ENCODE measurements at regions of chr3 and their contacts with region 1.

Region 1: GRCh38 chr3:138594150-138594934 is at the start of gene CEP70:
- DNase-seq: peak; percentile 93
- ATAC-seq: peak; percentile 96
- H3K4me3 Mint-ChIP-seq: peak within 1 kb of the TSS; percentile 86
- H3K27ac Mint-ChIP-seq: peak within 1 kb of the TSS; percentile 87
- H3K4me1 Mint-ChIP-seq: peaks cover 12% of the 10 kb centered on the region
- H3K27me3 Mint-ChIP-seq: no peaks in the 10 kb centered on the region
- total RNA-seq, gene CEP70: 15.9 to 19.5 TPM

Region 2: DNA sequence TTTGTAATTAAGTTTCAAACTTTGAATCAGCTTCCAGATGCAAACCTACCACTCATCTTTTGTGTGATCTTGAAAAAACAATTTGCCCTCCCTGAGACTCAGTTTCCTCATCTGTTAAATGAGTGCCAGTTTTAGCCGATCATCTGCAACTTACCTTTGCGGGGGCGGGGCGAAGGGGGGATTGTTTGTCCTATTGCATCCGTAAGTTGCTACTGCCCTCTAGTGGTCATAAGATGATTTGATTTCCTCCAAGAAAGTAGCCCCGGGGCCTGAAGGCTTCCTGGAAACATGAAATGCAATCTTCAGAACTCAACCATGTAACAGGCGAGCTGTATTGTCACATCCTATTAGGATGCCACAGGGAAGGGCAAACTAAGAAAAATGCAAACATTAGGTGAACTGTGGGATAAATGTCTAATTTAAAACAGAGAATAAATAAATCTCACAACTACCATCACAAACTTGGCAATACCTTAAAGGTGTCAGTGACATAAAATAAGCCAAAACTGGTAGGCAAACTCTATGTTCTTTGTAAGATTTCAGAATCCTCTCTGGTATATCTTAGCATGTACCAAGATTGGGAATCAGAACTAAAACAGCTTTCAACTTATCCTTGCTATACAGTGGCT is 647.9 kb before region 1 on chr3:
- CTCF ChIA-PET with region 1: no interaction called
- POLR2A ChIA-PET with region 1: no interaction called
- DNase-seq: peak; percentile 59
- ATAC-seq: peak; percentile 61
- H3K4me3 Mint-ChIP-seq: no peak overlapping the region
- H3K27ac Mint-ChIP-seq: no peak overlapping the region
- H3K4me1 Mint-ChIP-seq: no peaks in the 10 kb centered on the region
- H3K27me3 Mint-ChIP-seq: no peaks in the 10 kb centered on the region

Region 3: DNA sequence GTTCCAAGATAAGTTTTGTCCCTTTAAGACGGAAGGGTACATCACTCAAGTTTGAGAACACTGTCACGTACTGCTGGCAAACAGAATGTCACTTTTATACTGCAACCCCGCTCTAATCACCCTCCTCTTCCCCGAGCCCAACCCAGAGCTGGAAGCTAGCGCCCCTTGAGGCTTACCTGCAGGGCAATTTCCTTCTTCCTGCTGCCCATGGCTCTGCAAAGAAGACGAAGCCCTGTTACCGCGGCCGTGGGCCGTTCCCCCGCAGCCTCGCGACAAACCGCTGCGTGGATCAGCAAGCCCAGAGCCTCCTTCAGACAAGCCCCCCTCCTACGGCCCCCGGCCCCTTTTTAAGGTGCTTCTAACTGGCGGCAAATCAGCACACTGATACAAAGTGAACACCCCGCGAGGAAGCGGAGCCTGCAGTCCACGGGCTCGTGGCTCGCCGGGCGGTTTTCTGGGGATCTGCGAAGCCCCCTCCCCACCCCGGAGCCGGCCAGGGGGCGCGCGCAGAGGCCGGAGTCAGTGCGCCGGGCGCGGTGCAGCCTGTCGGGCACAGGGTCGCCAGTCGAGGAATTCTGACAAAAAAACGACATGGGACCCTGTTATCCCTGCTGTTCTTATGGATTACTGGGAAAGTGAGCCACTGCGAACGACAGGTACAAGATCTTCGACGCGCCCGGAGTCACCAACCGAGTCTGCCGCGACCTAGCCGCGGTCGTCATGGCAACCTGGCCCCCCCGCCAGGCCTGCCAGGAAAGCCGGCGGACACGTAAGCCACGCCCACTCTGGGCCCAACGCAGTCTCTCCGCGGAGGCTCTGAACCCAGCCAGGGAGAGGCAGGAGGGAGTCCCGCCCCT is 265.0 kb before region 1 on chr3 and contains the start of gene NME9:
- CTCF ChIA-PET with region 1: no interaction called
- POLR2A ChIA-PET with region 1: no interaction called
- DNase-seq: peak; percentile 88
- ATAC-seq: peak; percentile 93
- H3K4me3 Mint-ChIP-seq: peak within 1 kb of the TSS; percentile 87
- H3K27ac Mint-ChIP-seq: peak within 1 kb of the TSS; percentile 81
- H3K4me1 Mint-ChIP-seq: peaks cover 25% of the 10 kb centered on the region
- H3K27me3 Mint-ChIP-seq: peaks cover 1% of the 10 kb centered on the region
- total RNA-seq, gene NME9: not detected

Region 4: DNA sequence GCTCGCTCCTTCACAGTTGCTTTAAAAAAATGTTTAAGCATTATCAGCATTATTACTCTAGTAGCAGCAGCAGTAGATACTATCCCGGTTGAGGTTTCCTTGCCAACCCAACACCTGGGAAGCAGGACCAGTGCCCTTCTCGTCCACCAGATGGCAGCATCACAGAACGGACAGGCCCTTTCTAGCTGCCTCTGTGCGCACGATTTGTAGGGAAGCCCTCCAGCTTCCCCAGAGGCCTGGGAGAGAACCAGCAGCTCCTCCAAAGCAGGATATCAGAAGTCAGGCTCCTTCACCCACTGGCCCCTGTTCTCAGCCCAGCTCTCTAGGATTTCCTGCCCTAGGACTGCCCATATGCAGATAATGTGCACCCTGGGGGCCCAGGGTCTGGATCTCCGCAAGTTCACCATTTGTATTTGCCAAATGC is 176.8 kb before region 1 on chr3:
- CTCF ChIA-PET with region 1: interaction called, 11 read pairs
- POLR2A ChIA-PET with region 1: no interaction called
- DNase-seq: peak; percentile 73
- ATAC-seq: peak; percentile 96
- H3K4me3 Mint-ChIP-seq: no peak overlapping the region
- H3K27ac Mint-ChIP-seq: no peak overlapping the region
- H3K4me1 Mint-ChIP-seq: peaks cover 2% of the 10 kb centered on the region
- H3K27me3 Mint-ChIP-seq: peaks cover 7% of the 10 kb centered on the region

Region 5: DNA sequence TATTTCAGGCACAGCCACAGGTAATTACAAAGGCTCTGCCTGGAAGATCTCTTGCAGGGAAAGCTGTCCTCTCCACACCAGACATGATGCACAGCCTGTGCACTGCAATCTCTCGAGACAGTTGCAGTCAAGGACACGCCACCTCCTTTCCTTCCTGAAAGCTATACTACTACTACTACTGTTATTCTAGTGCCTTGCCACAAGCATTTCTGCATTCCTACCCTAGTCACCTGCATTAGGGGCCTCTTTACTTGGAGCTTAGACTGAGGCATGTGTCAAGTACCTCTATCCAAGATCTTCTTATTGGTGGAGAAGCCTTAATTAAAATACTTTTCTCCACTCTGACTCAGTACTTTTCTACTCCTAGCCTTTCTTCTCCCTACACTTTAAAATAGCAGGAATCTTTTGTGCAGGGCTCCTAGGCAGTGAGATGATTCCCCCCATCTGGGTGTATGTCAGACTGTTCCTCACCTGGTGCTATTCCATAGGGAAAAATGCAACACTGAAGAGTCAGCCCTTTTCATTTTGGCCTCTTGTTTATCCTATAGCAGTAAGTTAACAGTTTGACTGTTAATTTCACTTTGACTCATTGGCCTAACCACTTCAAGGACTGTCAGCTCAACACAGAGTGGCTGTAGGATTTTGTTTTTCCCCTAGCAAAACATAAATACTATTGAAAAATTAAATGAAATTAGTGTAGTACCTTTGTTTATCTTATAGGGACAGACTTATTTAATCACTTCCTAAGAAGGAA is 81.1 kb before region 1 on chr3:
- CTCF ChIA-PET with region 1: interaction called, 10 read pairs
- POLR2A ChIA-PET with region 1: interaction called, 8 read pairs
- DNase-seq: no peak
- ATAC-seq: peak; percentile 84
- H3K4me3 Mint-ChIP-seq: no peak overlapping the region
- H3K27ac Mint-ChIP-seq: peak overlapping the region; percentile 17
- H3K4me1 Mint-ChIP-seq: peaks cover 24% of the 10 kb centered on the region
- H3K27me3 Mint-ChIP-seq: no peaks in the 10 kb centered on the region

Region 6: DNA sequence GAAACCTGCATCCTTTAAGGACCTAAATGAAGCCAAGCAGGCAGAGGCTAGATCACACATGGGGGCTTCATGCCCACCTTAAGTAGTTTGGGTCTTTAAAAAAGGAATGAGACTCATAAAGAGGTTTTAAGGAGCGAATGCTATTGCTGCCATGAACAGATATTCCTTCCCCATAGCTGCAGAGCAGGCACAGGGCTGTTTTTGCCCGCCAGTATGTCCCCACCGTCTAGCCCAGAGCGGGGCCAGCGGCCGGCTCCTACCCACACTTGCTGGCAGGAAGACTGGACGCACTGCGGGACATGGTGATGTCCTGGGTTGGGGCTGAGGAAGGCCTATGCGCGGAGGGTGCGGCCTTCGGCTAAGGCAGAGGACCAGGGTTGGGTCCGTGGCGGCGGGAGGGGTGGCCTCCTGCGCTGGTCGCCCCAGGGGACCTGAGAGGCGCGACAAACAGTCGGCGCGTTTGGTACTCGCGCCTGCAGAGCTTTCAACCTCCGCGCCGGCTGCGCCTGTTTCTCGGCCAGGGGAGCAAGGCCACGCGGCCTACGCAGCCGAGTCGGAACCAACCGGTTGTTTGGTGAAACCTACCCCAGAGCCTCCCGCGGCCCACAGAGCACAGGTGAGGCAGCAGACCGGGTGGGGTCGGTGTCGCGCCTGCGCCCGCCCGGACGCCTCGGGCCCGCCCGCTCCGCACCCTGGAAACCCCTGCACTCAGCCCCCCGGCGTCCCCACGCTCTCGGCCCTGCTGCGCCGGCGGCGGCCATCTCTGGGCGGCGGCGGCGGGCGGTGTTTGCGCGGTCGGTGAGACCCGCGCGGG is 14.2 kb after region 1 on chr3 and contains the start of gene FAIM:
- CTCF ChIA-PET with region 1: interaction called, 36 read pairs
- POLR2A ChIA-PET with region 1: interaction called, 20 read pairs
- DNase-seq: peak; percentile 73
- ATAC-seq: peak; percentile 80
- H3K4me3 Mint-ChIP-seq: peak within 1 kb of the TSS; percentile 74
- H3K27ac Mint-ChIP-seq: peak within 1 kb of the TSS; percentile 88
- H3K4me1 Mint-ChIP-seq: peaks cover 16% of the 10 kb centered on the region
- H3K27me3 Mint-ChIP-seq: no peaks in the 10 kb centered on the region
- total RNA-seq, gene FAIM: 4.2 to 5.9 TPM

Region 7: DNA sequence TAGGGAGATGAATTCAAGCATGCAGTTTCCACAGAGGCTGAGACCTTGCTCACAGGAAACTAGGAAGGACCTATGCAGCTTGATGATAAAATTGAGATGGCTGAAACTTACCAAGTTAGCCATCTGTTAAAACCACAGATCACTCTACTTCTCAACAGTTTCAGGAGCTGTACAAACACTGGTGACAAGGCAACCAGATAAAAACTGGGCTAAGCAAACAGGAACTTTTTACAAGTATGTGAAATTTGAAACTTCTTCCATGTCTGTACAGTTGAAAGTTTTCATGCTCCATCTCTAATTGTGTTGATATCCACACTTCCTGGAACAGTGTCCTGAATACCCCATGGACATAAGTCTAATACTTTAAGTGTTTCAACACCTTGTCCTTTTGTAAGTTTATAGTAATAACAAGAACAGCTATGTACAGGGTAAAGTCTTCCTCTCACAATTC is 92.5 kb after region 1 on chr3:
- CTCF ChIA-PET with region 1: interaction called, 21 read pairs
- POLR2A ChIA-PET with region 1: interaction called, 5 read pairs
- DNase-seq: no peak
- ATAC-seq: no peak
- H3K4me3 Mint-ChIP-seq: no peak overlapping the region
- H3K27ac Mint-ChIP-seq: no peak overlapping the region
- H3K4me1 Mint-ChIP-seq: peaks cover 8% of the 10 kb centered on the region
- H3K27me3 Mint-ChIP-seq: no peaks in the 10 kb centered on the region

Region 8: GRCh38 chr3:138923531-138923994 is 329.2 kb after region 1 on chr3:
- CTCF ChIA-PET with region 1: interaction called, 137 read pairs
- POLR2A ChIA-PET with region 1: no interaction called
- DNase-seq: peak; percentile 90
- ATAC-seq: peak; percentile 83
- H3K4me3 Mint-ChIP-seq: no peak overlapping the region
- H3K27ac Mint-ChIP-seq: no peak overlapping the region
- H3K4me1 Mint-ChIP-seq: no peaks in the 10 kb centered on the region
- H3K27me3 Mint-ChIP-seq: peaks cover 8% of the 10 kb centered on the region

Measured in activated CD8-positive, alpha-beta T cell treated with anti-CD3 and anti-CD28 coated beads, Interleukin-2, amount 10 ng/mL, durations not matched to agents 7 days and 5 days (primary cell).